A549 (cell line): ENCODE measurements at regions of chr1 and their contacts with region 1.

Region 1: DNA sequence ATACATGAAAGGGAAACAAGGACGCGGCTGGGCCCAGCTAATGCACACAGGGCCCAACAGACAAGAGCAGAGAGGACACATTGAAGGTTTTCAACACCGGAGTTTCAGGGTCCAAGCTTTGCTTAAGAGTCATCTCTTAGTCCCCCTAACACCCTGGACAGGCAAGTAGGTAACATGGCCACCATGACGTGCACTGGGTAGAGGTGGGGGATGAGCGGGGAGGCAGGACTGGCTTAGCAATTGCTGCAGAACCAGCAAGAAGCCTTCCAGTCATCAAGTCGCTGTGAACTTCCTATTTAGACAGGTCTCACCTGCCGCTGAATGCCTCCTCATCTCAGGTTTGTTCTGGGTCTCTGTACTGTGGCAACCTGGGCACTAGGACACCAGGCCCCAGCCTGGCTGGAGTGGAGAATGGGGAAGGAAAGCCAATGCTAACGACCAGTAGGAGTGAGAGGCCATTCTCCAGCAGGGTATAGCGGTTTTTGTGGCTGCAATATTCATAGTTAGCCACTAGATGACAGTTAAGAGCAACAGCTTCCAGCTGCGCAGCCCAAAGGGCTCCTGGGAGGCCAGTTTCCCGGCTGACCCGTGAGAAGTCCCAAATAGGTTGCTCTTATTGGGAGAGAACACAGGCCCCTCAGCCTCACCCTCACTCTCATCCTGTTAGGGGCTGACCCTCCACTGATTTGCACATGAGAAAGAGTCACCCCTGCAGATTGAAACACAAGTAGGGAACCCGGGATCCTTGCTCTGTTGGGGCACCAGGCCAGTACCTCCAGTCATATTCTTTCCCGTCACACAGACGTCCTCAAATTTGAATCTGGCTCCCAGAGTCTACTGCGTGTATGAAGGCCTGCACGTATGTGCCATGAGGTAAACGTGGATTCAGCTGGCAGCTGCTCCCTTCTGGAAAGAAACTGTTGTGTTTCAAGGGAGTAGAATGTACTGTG is 6.0 kb upstream of the PIGC start:
- DNase-seq: peak; percentile 70 to 85
- ATAC-seq: peak; percentile 82 to 94
- H3K4me3 ChIP-seq: no peak overlapping the region
- H3K27ac ChIP-seq: peak overlapping the region; percentile 77 to 90
- H3K4me1 ChIP-seq: peaks cover 71% of the 10 kb centered on the region
- CTCF ChIP-seq: peak; percentile 88
- EP300 ChIP-seq: no peak
- POLR2A ChIP-seq: no peak
- RAD21 ChIP-seq: peak; percentile 91 to 92

Region 2: GRCh38 chr1:171948511-171948910 is 501.3 kb before region 1 on chr1:
- CTCF ChIA-PET with region 1: no interaction called
- POLR2A ChIA-PET with region 1: no interaction called
- DNase-seq: no peak
- ATAC-seq: no peak
- H3K4me3 ChIP-seq: no peak overlapping the region
- H3K27ac ChIP-seq: no peak overlapping the region
- H3K4me1 ChIP-seq: no peaks in the 10 kb centered on the region
- CTCF ChIP-seq: no peak
- EP300 ChIP-seq: no peak
- POLR2A ChIP-seq: no peak
- RAD21 ChIP-seq: no peak

Region 3: DNA sequence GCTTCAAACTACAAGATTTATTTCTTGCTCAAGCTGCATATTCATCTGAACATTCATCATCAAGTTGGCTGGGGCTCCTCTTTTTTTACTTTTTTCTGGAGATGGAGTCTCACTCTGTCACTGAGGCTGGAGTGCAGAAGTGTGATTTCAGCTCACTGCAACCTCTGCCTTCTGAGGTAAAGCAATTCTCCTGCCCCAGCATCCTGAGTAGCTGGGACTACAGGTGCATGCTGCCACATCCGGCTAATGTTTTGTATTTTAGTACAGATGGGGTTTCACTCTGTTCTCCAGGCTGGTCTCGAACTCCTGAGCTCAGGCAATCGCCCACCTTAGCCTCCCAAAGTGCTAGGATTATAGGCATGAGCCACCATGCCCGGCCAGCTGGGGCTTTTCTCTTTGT is 117.6 kb before region 1 on chr1:
- CTCF ChIA-PET with region 1: no interaction called
- POLR2A ChIA-PET with region 1: no interaction called
- DNase-seq: no peak
- ATAC-seq: no peak
- H3K4me3 ChIP-seq: no peak overlapping the region
- H3K27ac ChIP-seq: no peak overlapping the region
- H3K4me1 ChIP-seq: no peaks in the 10 kb centered on the region
- CTCF ChIP-seq: no peak
- EP300 ChIP-seq: no peak
- POLR2A ChIP-seq: no peak
- RAD21 ChIP-seq: no peak

Region 4: GRCh38 chr1:172421974-172422604 is 27.8 kb before region 1 on chr1:
- CTCF ChIA-PET with region 1: no interaction called
- POLR2A ChIA-PET with region 1: no interaction called
- DNase-seq: no peak
- ATAC-seq: no peak
- H3K4me3 ChIP-seq: no peak overlapping the region
- H3K27ac ChIP-seq: no peak overlapping the region
- H3K4me1 ChIP-seq: 0 out of 3 replicates have a peak, but pooled peaks cover 4% of the 10 kb centered on the region
- CTCF ChIP-seq: no peak
- EP300 ChIP-seq: no peak
- POLR2A ChIP-seq: no peak
- RAD21 ChIP-seq: no peak

Region 5: DNA sequence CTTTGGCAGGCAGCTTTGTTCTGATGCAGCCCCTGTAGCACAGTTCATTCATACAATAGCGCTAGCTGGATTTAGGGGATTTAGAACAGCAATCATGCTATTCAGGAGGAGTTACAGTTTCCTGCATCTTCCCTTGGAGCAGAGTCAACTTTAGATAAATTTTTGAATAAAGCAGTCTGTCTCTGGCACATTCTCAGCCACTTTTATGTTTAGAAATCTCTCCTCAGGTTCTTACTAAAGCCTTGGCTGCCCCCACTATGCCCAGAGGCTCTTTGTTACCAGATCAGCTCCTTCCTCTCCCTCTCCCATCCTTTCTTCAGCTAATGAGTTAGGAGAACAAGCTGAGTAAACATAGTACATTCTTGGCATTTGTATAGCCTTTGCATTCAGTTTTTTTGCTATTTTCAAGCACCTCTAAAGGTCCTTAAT is 11.0 kb after region 1 on chr1:
- CTCF ChIA-PET with region 1: interaction called, 22 read pairs
- POLR2A ChIA-PET with region 1: no interaction called
- DNase-seq: peak in 1 of 2 experiments; percentile 30
- ATAC-seq: peak; percentile 46 to 71; a peak in 5 of 6 replicates
- H3K4me3 ChIP-seq: no peak overlapping the region
- H3K27ac ChIP-seq: peak overlapping the region; percentile 65 to 79
- H3K4me1 ChIP-seq: peaks cover 27% of the 10 kb centered on the region
- CTCF ChIP-seq: no peak
- EP300 ChIP-seq: no peak
- POLR2A ChIP-seq: no peak
- RAD21 ChIP-seq: no peak; a peak in 1 of 5 replicates

Region 6: GRCh38 chr1:172466795-172467407 is 17.0 kb after region 1 on chr1:
- CTCF ChIA-PET with region 1: interaction called, 22 read pairs
- POLR2A ChIA-PET with region 1: no interaction called
- DNase-seq: peak in 1 of 2 experiments; percentile 45
- ATAC-seq: peak; percentile 61 to 80
- H3K4me3 ChIP-seq: peak overlapping the region; percentile 14; the same call in 1 of the 3 replicates
- H3K27ac ChIP-seq: peak overlapping the region; percentile 78 to 81
- H3K4me1 ChIP-seq: peaks cover 37% of the 10 kb centered on the region
- CTCF ChIP-seq: no peak
- EP300 ChIP-seq: no peak
- POLR2A ChIP-seq: no peak
- RAD21 ChIP-seq: no peak

Region 7: GRCh38 chr1:172500207-172500606 is 50.3 kb after region 1 on chr1:
- CTCF ChIA-PET with region 1: no interaction called
- POLR2A ChIA-PET with region 1: no interaction called
- DNase-seq: no peak
- ATAC-seq: no peak
- H3K4me3 ChIP-seq: no peak overlapping the region
- H3K27ac ChIP-seq: peak overlapping the region in 1 of 2 experiments; percentile 23; a peak in 1 of 6 replicates
- H3K4me1 ChIP-seq: peaks cover 18% of the 10 kb centered on the region
- CTCF ChIP-seq: no peak
- EP300 ChIP-seq: no peak
- POLR2A ChIP-seq: no peak
- RAD21 ChIP-seq: no peak